Transverse colon (tissue), 4 donors: ENCODE measurements at regions of chr1 and their contacts with region 1.

Region 1: DNA sequence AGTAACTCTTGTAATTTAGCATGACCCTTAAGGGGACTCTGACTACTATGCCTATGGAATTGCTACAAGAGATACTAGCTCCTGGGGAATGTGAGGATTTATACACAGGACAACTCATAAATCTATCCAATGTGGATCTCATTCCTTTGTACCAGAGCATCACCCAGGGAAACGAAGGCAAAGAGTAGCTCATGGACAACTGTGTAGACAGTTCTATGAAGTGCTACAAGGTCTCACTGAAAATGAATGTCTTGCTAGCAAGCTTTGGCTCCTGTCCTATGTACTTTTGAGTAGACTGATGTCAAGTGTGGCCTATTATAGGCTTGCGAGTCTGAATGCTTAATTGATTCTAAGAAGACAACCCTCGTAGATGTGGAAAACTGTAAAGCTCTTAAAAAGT is 93.7 kb downstream of the ZSWIM5 start:
- DNase-seq: no peak
- H3K4me3 ChIP-seq: no peak overlapping the region
- H3K27ac ChIP-seq: no peak overlapping the region
- H3K4me1 ChIP-seq: peaks cover 0 to 4% (median 0%) of the 10 kb centered on the region in 4 donors
- H3K27me3 ChIP-seq: no peaks in the 10 kb centered on the region
- CTCF ChIP-seq: no peak
- EP300 ChIP-seq: no peak
- POLR2A ChIP-seq: no peak

Region 2: DNA sequence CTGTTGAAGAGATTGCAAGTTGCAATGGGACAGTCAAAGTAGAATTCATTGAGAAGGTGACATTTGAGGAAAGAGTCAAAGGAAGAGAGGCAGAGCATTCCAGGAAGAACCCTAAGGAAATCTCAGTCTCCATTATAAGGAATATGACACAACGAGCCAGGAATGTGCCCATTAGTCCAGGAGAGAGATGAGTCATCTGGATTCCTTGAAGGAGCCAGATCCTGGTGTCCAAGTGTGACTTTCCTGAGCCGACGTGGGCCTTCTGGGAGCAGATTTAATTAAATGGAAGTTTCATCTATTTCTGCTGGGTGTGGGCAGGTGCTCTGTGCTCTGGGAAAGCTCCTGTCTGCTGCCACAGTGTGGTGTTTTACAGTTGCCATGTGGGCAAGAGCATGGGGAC is 1290.6 kb before region 1 on chr1:
- in situ Hi-C with region 1: no loop called
- intact Hi-C with region 1: no loop called
- DNase-seq: no peak
- H3K4me3 ChIP-seq: no peak overlapping the region
- H3K27ac ChIP-seq: peak overlapping the region; percentile 31 to 67 (median 56)
- H3K4me1 ChIP-seq: peaks cover 3 to 17% (median 5%) of the 10 kb centered on the region in 4 donors
- H3K27me3 ChIP-seq: no peaks in the 10 kb centered on the region
- CTCF ChIP-seq: no peak
- EP300 ChIP-seq: no peak
- POLR2A ChIP-seq: no peak

Region 3: GRCh38 chr1:45018599-45019230 is 93.9 kb before region 1 on chr1:
- in situ Hi-C with region 1: no loop called
- intact Hi-C with region 1: no loop called
- DNase-seq: peak; percentile 74
- H3K4me3 ChIP-seq: no peak overlapping the region
- H3K27ac ChIP-seq: no peak overlapping the region
- H3K4me1 ChIP-seq: peaks cover 0 to 6% (median 2%) of the 10 kb centered on the region in 4 donors
- H3K27me3 ChIP-seq: no peaks in the 10 kb centered on the region
- CTCF ChIP-seq: peak; percentile 59 to 86 (median 79)
- EP300 ChIP-seq: no peak
- POLR2A ChIP-seq: no peak

Region 4: GRCh38 chr1:45155423-45155822 is 42.8 kb after region 1 on chr1:
- in situ Hi-C with region 1: no loop called
- intact Hi-C with region 1: loop called (anchors 2 kb)
- DNase-seq: peak; percentile 50
- H3K4me3 ChIP-seq: no peak overlapping the region
- H3K27ac ChIP-seq: no peak overlapping the region
- H3K4me1 ChIP-seq: peaks cover 0 to 7% (median 0%) of the 10 kb centered on the region in 4 donors
- H3K27me3 ChIP-seq: no peaks in the 10 kb centered on the region
- CTCF ChIP-seq: no peak
- EP300 ChIP-seq: no peak
- POLR2A ChIP-seq: no peak